ENCODE measurements at regions of chr7 and their contacts with region 1.

Region 1: DNA sequence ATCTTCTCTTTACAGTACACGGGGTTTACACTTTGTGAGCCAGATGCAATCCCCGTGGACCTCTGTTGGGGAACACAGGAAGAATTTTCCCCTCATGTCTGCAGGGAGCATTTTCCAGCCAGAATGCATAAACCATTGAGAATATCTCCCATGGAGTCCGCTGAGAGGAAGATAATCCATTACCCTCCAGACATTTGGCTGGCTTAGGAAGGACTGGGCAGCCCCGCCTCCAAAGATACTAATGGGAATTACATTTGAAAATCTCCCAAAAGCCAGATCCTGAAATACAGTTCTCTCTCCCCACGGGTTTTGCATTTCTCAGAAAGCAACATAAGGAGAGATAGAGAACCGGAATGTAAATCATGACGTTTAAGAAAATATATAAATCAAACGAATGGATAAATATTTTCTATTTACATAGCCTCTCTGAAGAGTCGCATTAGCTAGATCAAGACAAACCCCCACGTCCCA is 53.5 kb downstream of the TRIL start:
- DNase-seq: no peak
- ATAC-seq: no peak
- H3K4me3 ChIP-seq: no peak overlapping the region
- H3K4me3 Mint-ChIP-seq: no peak overlapping the region
- H3K27ac ChIP-seq: no peak overlapping the region
- H3K27ac Mint-ChIP-seq: no peak overlapping the region
- H3K4me1 ChIP-seq: no peaks in the 10 kb centered on the region
- H3K4me1 Mint-ChIP-seq: no peaks in the 10 kb centered on the region
- H3K27me3 ChIP-seq: no peaks in the 10 kb centered on the region
- H3K27me3 Mint-ChIP-seq: peaks cover 6 to 43% (median 30%) of the 10 kb centered on the region in 5 donors

Region 2: DNA sequence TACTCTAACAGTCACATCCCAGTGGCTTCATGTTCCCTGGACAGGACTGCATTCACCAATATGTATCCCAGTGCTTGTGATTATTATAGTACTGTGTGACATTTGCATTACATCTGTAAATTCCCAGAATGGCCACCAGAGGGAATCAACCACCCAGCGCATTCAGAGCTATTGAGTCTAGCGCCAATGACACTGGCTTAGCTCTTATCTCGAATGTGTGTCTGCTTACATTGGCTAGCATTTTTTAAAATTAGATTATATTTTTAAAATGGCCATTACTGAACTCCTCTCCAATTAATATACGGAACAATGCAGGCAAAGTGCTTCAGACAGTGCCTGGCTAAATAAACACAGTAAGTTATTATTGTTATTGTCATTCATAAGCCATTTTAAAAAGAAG is 17.2 kb after region 1 on chr7:
- CTCF ChIA-PET with region 1: interaction called, 23 read pairs
- POLR2A ChIA-PET with region 1: no interaction called
- intact Hi-C with region 1: no loop called
- DNase-seq: peak in 7 of 9 donors; percentile 17 to 56 (median 39)
- ATAC-seq: peak; percentile 88
- H3K4me3 ChIP-seq: no peak overlapping the region
- H3K4me3 Mint-ChIP-seq: peak overlapping the region in 1 of 10 donors; percentile 16
- H3K27ac ChIP-seq: no peak overlapping the region
- H3K27ac Mint-ChIP-seq: no peak overlapping the region
- H3K4me1 ChIP-seq: peaks cover 0 to 8% of the 10 kb centered on the region in 2 donors
- H3K4me1 Mint-ChIP-seq: peaks cover 0 to 23% (median 14%) of the 10 kb centered on the region in 7 donors
- H3K27me3 ChIP-seq: no peaks in the 10 kb centered on the region
- H3K27me3 Mint-ChIP-seq: peaks cover 0 to 22% (median 0%) of the 10 kb centered on the region in 5 donors

Region 3: DNA sequence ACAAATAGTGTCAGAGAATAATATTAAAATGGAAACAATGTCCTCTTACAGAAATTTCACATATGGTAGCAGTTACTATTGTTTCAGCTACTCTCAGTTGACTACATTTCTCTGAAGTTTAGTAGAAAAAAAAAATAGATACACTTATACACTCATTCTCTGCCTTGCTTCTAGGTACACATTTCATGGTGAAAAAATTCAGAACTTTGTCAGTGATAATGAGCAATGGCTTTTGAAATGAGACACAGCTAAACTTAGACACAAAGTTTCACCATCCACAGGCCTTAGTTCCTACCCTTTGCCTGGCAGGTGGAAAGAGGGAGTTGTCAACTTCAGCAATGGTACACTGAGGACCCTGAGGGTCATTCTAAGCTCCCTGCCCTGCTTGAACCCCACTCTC is 172.6 kb after region 1 on chr7:
- CTCF ChIA-PET with region 1: interaction called, 11 read pairs
- POLR2A ChIA-PET with region 1: no interaction called
- intact Hi-C with region 1: no loop called
- DNase-seq: no peak
- ATAC-seq: no peak
- H3K4me3 ChIP-seq: no peak overlapping the region
- H3K4me3 Mint-ChIP-seq: no peak overlapping the region
- H3K27ac ChIP-seq: no peak overlapping the region
- H3K27ac Mint-ChIP-seq: no peak overlapping the region
- H3K4me1 ChIP-seq: no peaks in the 10 kb centered on the region
- H3K4me1 Mint-ChIP-seq: no peaks in the 10 kb centered on the region
- H3K27me3 ChIP-seq: no peaks in the 10 kb centered on the region
- H3K27me3 Mint-ChIP-seq: peaks cover 4 to 18% (median 15%) of the 10 kb centered on the region in 5 donors

Measured in naive thymus-derived CD4-positive, alpha-beta T cell (primary cell).